Psoas muscle (tissue), 8 donors: ENCODE measurements at regions of chr2 and their contacts with region 1.

Region 1: DNA sequence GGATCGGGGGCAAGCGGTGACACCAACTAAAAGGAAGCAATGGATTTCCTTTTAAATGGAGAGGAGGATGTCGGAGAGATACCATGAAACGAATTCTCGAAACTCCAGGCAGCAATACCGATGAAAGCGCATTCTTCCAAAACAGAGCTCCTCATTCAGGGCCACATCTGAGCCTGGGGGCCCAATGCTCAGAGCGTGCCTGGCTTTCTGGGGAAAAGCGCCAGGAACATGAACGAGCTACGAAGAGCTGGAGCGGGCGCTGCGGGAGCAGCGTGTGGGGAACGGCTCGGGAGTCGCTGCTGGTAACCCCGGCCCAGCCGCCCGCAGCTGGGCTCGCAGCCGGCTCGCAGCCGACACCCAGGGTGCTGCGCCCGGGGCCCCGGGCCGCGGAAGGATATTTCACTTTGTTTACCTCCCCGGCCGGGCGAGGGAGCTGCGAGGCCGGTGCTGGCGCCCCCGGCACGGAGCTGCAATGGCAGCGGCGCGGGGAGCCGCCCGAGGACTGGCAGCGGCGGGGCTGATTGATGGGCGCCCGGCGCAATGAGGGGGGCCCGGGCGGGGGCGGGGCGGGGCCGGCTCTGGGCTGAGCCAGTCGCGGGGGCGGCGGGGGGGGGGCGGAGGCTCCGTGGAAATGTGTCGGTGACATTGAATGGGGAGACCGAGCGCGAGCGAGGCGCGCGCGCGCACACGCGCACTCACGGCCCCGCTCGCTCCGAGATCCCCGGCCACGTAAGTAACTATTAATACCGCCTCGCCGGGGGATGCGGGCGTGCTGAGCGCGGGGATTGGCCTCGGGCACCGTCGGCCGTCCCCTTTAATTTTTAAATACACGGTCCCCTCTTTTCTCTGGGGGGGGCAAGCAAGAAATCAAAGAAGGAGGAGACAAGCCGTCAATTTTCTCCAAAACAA is at the start of gene TRIB2:
- DNase-seq: peak; percentile 91 to 94
- ATAC-seq: peak; percentile 87 to 90 (median 88)
- H3K4me3 ChIP-seq: peak within 1 kb of the TSS; percentile 90
- H3K27ac ChIP-seq: peak within 1 kb of the TSS; percentile 91
- H3K4me1 ChIP-seq: peaks cover 29% of the 10 kb centered on the region
- H3K27me3 ChIP-seq: no peaks in the 10 kb centered on the region
- CTCF ChIP-seq: no peak
- total RNA-seq, gene TRIB2: 9.0 to 12.5 (median 11.1) TPM

Region 2: GRCh38 chr2:11829947-11830707 is 886.4 kb before region 1 on chr2:
- intact Hi-C with region 1: loop called in 1 of 2 experiments (anchors 1 kb)
- DNase-seq: peak; percentile 69 to 75
- ATAC-seq: peak; percentile 78 to 89 (median 81)
- H3K4me3 ChIP-seq: peak overlapping the region; percentile 39
- H3K27ac ChIP-seq: peak overlapping the region; percentile 64
- H3K4me1 ChIP-seq: peaks cover 21% of the 10 kb centered on the region
- H3K27me3 ChIP-seq: no peaks in the 10 kb centered on the region
- CTCF ChIP-seq: peak; percentile 26

Region 3: DNA sequence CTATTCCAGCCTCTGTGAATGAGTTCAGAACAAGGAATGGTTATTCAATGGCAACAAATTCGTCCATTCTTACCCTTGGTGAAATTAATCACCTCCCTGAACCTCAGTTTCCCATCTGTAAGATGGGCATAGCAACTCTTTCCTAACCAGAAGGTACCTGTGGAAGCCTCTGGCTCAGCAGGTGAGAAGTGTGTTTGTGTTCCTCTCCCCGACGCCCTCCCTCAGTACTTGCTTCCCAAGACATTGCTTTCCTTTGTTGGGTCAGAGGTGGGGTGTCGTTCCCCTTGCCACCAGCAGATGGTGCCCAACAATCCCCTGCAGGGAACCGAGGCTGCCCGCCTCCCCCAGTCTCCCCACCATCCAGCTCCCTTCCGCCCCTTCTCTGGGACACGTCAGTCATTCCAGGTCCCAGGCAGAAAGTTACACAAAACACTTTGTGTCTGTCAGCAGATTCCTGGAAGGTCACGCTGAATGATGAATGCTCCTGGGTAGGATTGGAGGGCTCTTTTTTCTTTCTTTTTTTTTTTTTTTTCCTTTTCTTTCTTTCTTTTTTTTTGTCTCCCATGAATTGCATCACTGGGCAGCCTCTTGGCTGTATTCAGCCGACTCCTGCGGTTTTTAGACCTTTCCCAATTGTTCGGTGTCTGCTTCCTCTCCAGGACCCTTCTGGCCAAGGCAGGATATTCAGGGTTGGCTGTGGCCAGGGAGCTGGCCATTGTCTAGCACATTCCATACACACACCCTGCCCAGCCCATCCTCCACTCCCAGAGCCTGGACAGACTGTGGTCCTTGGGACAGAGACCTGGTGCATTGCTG is 852.8 kb before region 1 on chr2:
- intact Hi-C with region 1: loop called (anchors 2 to 10 kb)
- DNase-seq: peak; percentile 82 to 88
- ATAC-seq: peak; percentile 86 to 96 (median 92)
- H3K4me3 ChIP-seq: no peak overlapping the region
- H3K27ac ChIP-seq: no peak overlapping the region
- H3K4me1 ChIP-seq: peaks cover 4% of the 10 kb centered on the region
- H3K27me3 ChIP-seq: no peaks in the 10 kb centered on the region
- CTCF ChIP-seq: peak; percentile 91

Region 4: GRCh38 chr2:12176623-12177454 is 539.7 kb before region 1 on chr2:
- intact Hi-C with region 1: loop called in 1 of 2 experiments (anchors 10 kb)
- DNase-seq: peak; percentile 58 to 65
- ATAC-seq: peak; percentile 88 to 99 (median 94)
- H3K4me3 ChIP-seq: no peak overlapping the region
- H3K27ac ChIP-seq: peak overlapping the region; percentile 58
- H3K4me1 ChIP-seq: peaks cover 23% of the 10 kb centered on the region
- H3K27me3 ChIP-seq: no peaks in the 10 kb centered on the region
- CTCF ChIP-seq: no peak

Region 5: DNA sequence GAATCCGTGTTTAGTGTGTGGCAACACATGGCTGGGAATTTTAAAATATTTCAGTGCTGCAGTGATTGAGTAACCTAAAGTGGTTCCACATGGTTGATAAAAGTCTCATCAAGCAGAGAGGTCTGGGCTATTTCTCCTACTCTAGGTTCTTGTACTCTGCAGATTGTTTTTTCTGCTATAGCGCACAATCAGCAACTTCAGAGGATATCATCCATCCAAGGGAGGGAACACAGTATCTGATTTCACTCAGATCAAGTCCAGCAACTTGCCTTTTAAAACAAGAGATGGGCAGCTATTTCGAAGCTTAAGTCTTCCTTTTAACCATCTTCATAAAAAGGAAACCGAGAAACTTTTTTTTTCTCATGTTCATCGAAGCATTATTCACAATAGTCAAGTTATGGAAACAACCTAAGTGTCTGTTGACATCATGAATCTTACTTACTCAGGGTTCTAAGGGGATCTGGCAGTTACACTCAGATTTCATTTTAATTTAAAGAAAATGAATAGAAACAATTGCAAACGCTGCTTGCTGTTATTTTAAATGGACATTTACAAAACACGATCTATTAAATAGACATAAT is 172.5 kb before region 1 on chr2:
- intact Hi-C with region 1: no loop called
- DNase-seq: no peak
- ATAC-seq: no peak
- H3K4me3 ChIP-seq: no peak overlapping the region
- H3K27ac ChIP-seq: no peak overlapping the region
- H3K4me1 ChIP-seq: no peaks in the 10 kb centered on the region
- H3K27me3 ChIP-seq: no peaks in the 10 kb centered on the region
- CTCF ChIP-seq: no peak

Region 6: GRCh38 chr2:12931186-12931844 is 214.8 kb after region 1 on chr2:
- intact Hi-C with region 1: loop called (anchors 2 to 5 kb)
- DNase-seq: no peak
- ATAC-seq: peak; percentile 61 to 93 (median 87)
- H3K4me3 ChIP-seq: no peak overlapping the region
- H3K27ac ChIP-seq: no peak overlapping the region
- H3K4me1 ChIP-seq: no peaks in the 10 kb centered on the region
- H3K27me3 ChIP-seq: peaks cover 0 to 3% (median 0%) of the 10 kb centered on the region in 3 donors
- CTCF ChIP-seq: peak; percentile 91

Region 7: DNA sequence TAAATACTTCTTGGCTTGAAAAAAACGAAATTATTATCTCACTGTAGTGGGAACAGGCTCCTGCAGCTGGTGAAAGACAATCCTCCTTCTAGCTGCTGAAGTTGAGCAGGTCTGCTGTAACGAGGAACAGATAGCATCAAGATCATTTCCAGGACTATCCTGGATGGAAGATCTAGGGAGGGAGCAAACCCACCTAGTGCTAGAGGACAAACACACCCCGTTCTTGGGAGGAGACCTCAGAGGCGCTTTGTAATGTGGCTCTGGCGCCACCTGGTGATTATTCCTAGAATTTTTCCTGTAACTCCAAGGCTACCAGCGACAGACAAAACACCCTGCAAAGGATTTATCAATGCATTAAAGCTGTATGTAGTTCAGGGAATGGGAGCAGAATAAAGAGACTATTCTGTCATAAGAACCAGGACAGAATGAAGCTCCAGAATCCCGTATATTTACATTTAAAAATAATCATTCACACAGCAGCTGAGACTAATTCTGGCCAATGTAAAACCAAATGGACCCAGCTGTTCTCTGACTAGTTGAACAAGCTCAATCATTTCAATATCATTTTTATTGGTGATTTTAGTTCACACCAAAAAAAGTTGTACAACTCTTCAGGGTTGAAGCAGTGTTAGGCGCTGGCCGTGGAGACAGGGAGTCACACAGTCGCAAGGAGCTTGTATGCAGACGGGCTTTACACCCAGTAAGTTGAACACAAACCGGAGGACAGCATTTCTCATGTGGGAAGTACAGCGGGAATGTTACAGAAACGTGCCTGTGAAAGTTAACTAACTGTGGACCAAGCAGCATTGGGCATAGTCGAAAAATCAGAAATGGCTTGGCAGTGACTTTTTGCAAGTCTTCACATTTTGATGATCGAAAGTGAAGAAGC is 290.5 kb after region 1 on chr2:
- intact Hi-C with region 1: loop called (anchors 2 to 10 kb)
- DNase-seq: peak in 1 of 2 donors; percentile 30
- ATAC-seq: peak; percentile 58 to 89 (median 80)
- H3K4me3 ChIP-seq: no peak overlapping the region
- H3K27ac ChIP-seq: no peak overlapping the region
- H3K4me1 ChIP-seq: no peaks in the 10 kb centered on the region
- H3K27me3 ChIP-seq: no peaks in the 10 kb centered on the region
- CTCF ChIP-seq: peak; percentile 87